RWPE1 (cell line): ENCODE measurements at regions of chr1 and their contacts with region 1.

Region 1: GRCh38 chr1:225772323-225772768 is 5.3 kb upstream of the SRP9 start:
- DNase-seq: peak; percentile 95
- H3K27ac ChIP-seq: peak overlapping the region; percentile 38
- CTCF ChIP-seq: peak; percentile 89

Region 2: GRCh38 chr1:225544263-225544662 is 228.1 kb before region 1 on chr1:
- CTCF ChIA-PET with region 1: interaction called, 18 read pairs
- POLR2A ChIA-PET with region 1: no interaction called
- DNase-seq: no peak
- H3K27ac ChIP-seq: no peak overlapping the region
- CTCF ChIP-seq: no peak

Region 3: DNA sequence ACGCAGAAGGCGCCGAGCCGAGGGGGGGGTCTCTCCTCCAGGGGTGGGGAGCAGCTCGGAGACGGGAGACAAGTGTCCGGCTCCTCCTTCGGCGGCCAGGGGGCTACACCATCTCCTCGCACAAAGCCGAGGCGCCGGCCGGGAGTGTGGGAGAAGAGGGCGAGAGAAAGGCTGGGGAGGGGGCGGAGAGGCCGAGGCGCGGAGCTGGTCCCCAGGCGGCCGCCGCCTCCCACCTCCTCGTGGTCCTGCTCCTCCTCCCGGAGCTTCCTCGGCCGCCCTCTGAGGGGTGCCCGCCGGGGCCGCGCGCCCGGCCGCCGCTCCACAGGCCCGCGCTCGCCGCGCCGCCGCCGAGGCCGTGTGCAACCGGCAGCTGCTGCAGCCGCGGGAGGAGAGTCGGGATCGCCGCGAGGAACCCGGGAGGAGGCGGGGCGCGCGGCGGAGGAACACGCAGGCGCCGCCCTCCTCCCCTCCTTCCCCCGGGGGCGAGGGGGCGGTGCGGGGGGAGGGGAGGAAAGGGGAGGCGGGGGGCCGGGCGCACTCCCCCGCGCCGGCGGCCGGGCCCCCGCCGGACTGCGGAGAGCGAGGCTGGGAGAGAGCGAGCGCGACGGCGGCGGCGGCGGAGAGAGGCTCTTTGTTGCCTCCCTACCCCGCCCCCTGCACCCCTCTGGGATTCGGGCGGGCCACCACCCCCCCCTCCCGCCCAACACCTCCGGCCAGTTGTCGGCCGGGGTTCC is 119.5 kb before region 1 on chr1 and contains the start of gene ENAH:
- CTCF ChIA-PET with region 1: interaction called, 28 read pairs
- POLR2A ChIA-PET with region 1: interaction called, 4 read pairs
- DNase-seq: peak; percentile 88
- H3K27ac ChIP-seq: peak within 1 kb of the TSS; percentile 94
- CTCF ChIP-seq: no peak

Region 4: DNA sequence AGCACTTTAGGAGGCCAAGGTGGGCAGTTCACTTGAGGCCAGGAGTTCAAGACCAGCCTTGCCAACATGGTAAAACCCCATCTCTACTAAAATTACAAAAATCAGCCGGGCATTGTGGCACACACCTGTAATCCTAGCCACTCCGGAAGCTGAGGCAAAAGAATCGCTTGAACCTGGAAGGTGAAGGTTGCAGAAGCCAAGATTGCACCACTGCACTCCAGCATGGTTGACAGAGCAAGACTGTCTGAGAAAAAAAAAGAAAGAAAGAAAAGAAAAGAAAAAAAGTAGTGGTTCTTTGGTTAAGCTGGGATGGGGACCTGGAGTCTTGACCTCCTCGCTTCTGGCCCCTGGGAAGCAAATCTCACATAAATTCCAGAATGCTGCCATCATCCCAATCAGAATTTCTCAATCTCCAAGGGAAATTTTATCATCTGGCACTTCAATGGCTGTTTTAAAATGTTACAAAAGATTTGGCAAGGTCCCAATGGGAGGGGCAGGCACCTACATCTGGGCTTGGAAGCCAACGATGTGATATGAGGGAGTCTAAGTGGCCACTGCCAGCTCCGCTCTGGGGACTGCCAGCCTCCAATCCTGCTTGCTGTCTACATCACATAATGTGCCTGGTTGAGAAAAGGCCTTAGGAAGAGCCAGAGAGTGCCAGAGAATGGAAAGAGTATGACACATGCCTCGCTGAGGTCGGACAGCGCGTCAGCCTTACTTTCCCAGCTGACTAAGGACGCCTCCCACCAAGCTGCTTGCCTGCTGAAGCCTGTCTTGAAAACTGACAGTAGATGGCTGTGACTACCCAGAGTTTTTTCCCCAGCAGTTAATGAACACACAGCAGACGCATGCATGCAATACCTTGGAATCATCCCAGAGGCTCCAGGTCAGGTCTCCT is 36.8 kb before region 1 on chr1:
- CTCF ChIA-PET with region 1: interaction called, 35 read pairs
- POLR2A ChIA-PET with region 1: no interaction called
- DNase-seq: peak; percentile 97
- H3K27ac ChIP-seq: peak overlapping the region; percentile 92
- CTCF ChIP-seq: no peak

Region 5: DNA sequence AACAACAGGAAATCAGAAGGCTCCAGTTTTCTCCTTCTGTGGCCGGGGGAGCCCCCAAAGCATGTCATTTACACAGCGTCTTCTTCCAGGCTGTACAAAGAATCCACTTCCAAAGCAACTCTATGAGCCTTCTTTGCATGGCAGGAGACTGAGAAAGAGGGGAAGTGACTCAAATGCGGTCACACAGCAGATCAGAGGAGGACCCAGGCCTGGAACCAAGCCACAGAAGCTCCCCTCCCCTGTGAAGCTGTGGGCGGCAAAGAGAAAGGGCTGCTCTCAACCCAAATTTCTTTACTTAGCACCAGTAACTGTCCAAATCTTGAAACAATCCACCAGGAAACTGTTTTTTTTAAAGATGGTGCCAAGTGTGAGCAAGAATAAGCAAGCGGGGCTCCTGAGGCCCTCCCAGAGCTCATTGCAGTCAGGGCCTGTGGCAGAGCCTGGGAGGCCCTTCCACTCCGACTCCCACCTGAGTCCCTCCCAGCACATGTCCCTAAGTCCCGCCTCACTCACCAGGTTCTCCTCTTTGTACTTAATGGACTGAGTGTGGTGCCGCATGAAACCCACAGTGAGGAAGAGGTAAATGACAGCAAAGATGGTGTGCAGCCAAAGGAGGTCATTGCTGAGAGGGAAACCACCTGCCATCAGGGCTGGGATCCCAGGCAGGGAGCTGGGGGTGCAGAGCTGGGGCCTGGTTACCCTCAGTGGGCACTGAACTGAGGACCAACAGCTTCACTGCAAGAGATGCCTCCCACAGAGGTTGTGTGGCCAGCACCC is 93.9 kb after region 1 on chr1:
- CTCF ChIA-PET with region 1: no interaction called
- POLR2A ChIA-PET with region 1: no interaction called
- DNase-seq: no peak
- H3K27ac ChIP-seq: peak overlapping the region; percentile 11
- CTCF ChIP-seq: no peak

Region 6: DNA sequence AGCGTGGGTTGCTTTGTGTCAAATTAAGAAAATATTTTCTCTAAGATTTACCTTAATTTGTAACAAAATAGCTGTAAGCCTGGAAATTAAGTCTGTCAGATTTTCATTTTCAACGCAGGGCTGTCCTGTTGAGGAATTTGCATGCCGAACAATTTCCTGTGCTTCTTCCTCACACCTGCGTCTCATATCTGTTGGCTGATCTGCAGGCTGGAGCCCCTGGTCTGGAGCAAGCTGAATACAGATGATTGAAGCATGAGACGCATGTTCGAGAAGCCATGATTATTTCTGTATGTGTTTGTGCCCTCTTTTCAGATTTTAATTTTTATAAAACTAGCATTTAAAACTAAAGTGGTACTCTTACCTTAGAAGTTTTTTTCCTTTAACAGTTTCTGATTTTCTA is 460.9 kb after region 1 on chr1:
- CTCF ChIA-PET with region 1: no interaction called
- POLR2A ChIA-PET with region 1: no interaction called
- DNase-seq: no peak
- H3K27ac ChIP-seq: no peak overlapping the region
- CTCF ChIP-seq: no peak